ENCODE measurements at regions of chr3 and their contacts with region 1.

Region 1: GRCh38 chr3:74614107-74614967 is at the start of gene CNTN3:
- DNase-seq: peak; percentile 57
- H3K4me3 ChIP-seq: peak within 1 kb of the TSS; percentile 59 to 83 (median 71)
- H3K27ac ChIP-seq: peak within 1 kb of the TSS; percentile 98
- H3K4me1 ChIP-seq: peaks cover 22% of the 10 kb centered on the region
- H3K27me3 ChIP-seq: no peaks in the 10 kb centered on the region
- CTCF ChIP-seq: no peak
- total RNA-seq, gene CNTN3: 29.8 to 32.7 TPM

Region 2: GRCh38 chr3:74443102-74443501 is 171.2 kb before region 1 on chr3:
- CTCF ChIA-PET with region 1: no interaction called
- dilution Hi-C with region 1: no loop called
- in situ Hi-C with region 1: no loop called
- intact Hi-C with region 1: loop called (anchors 10 kb)
- DNase-seq: peak; percentile 93
- H3K4me3 ChIP-seq: no peak overlapping the region
- H3K27ac ChIP-seq: peak overlapping the region; percentile 41
- H3K4me1 ChIP-seq: peaks cover 17% of the 10 kb centered on the region
- H3K27me3 ChIP-seq: no peaks in the 10 kb centered on the region
- CTCF ChIP-seq: peak in 1 of 2 donors; percentile 29

Region 3: GRCh38 chr3:74532446-74532845 is 81.9 kb before region 1 on chr3:
- CTCF ChIA-PET with region 1: no interaction called
- dilution Hi-C with region 1: no loop called
- in situ Hi-C with region 1: no loop called
- intact Hi-C with region 1: loop called (anchors 5 kb)
- DNase-seq: peak; percentile 93
- H3K4me3 ChIP-seq: no peak overlapping the region
- H3K27ac ChIP-seq: peak overlapping the region; percentile 99
- H3K4me1 ChIP-seq: peaks cover 59% of the 10 kb centered on the region
- H3K27me3 ChIP-seq: no peaks in the 10 kb centered on the region
- CTCF ChIP-seq: no peak